Endothelial cell of umbilical vein (primary cell): ENCODE measurements at regions of chr10 and their contacts with region 1.

Region 1: GRCh38 chr10:71270301-71271220 is 48.5 kb upstream of the SLC29A3 start:
- DNase-seq: peak; percentile 54
- H3K4me3 ChIP-seq: no peak overlapping the region
- H3K27ac ChIP-seq: peak overlapping the region; percentile 82
- H3K4me1 ChIP-seq: peaks cover 19% of the 10 kb centered on the region
- H3K27me3 ChIP-seq: no peaks in the 10 kb centered on the region
- CTCF ChIP-seq: peak; percentile 66 to 80
- POLR2A ChIP-seq: no peak

Region 2: DNA sequence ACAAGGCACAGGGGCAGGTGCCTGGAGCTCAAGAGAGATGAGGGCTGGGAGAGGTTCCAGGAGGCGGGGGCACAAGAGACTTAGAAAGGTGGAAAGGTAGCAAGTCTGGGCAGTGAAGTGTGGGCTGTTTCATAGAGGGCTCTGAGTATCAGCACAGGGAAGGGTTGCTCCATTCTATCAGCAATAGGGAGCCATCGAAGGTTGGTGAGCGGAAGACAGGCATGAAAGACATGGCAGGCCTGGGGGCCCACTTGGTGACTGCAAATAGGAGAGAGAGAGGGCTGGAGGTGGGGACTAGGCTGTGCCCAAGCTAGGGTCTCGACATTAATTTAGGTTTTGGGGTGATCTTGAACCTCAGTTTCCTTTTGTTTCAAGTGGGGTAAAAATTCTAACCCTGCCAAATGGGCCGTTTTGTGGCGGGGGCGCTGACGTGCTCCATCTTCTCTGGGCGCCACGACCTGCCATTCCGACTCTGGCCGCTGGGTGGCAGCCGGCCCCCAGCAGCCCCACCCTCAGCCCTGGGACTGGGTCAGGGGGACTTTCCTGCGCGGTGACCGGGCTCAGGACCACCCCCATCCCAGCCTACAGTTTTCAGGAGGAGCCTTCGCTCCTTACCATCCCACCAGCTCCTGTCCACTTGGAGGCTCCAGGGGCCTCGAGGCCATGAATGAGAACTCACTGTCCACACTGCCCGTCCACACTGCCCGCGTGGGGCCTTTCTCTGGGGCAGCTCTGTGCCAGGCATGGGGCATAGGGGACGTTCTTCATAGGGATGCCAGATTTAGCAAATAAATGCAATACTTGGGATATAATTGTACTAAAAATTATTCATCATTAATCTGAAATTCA is 345.0 kb before region 1 on chr10:
- CTCF ChIA-PET with region 1: interaction called, 26 read pairs
- POLR2A ChIA-PET with region 1: no interaction called
- dilution Hi-C with region 1: no loop called
- intact Hi-C with region 1: loop called (anchors 5 kb)
- DNase-seq: peak; percentile 30
- H3K4me3 ChIP-seq: no peak overlapping the region
- H3K27ac ChIP-seq: no peak overlapping the region
- H3K4me1 ChIP-seq: no peaks in the 10 kb centered on the region
- H3K27me3 ChIP-seq: peaks cover 5 to 9% of the 10 kb centered on the region in 2 experiments
- CTCF ChIP-seq: peak; percentile 91 to 94
- POLR2A ChIP-seq: no peak

Region 3: GRCh38 chr10:71212318-71213126 is 58.0 kb before region 1 on chr10 and contains the start of gene UNC5B:
- CTCF ChIA-PET with region 1: interaction called, 51 read pairs
- POLR2A ChIA-PET with region 1: no interaction called
- dilution Hi-C with region 1: no loop called
- intact Hi-C with region 1: loop called (anchors 1 kb)
- DNase-seq: peak; percentile 80
- H3K4me3 ChIP-seq: peak within 1 kb of the TSS; percentile 11 to 36 (median 33)
- H3K27ac ChIP-seq: no peak within 1 kb of the TSS
- H3K4me1 ChIP-seq: peaks cover 21% of the 10 kb centered on the region
- H3K27me3 ChIP-seq: peaks cover 46 to 63% of the 10 kb centered on the region in 2 experiments
- CTCF ChIP-seq: peak in 1 of 2 donors; percentile 19
- POLR2A ChIP-seq: no peak
- total RNA-seq, gene UNC5B: 2.5 and 5.4 TPM in 2 replicates

Region 4: GRCh38 chr10:71234970-71235685 is 35.4 kb before region 1 on chr10:
- CTCF ChIA-PET with region 1: interaction called, 19 read pairs
- POLR2A ChIA-PET with region 1: no interaction called
- dilution Hi-C with region 1: no loop called
- intact Hi-C with region 1: no loop called
- DNase-seq: no peak
- H3K4me3 ChIP-seq: no peak overlapping the region
- H3K27ac ChIP-seq: no peak overlapping the region
- H3K4me1 ChIP-seq: peaks cover 5% of the 10 kb centered on the region
- H3K27me3 ChIP-seq: peaks cover 3 to 21% of the 10 kb centered on the region in 2 experiments
- CTCF ChIP-seq: no peak
- POLR2A ChIP-seq: no peak

Region 5: DNA sequence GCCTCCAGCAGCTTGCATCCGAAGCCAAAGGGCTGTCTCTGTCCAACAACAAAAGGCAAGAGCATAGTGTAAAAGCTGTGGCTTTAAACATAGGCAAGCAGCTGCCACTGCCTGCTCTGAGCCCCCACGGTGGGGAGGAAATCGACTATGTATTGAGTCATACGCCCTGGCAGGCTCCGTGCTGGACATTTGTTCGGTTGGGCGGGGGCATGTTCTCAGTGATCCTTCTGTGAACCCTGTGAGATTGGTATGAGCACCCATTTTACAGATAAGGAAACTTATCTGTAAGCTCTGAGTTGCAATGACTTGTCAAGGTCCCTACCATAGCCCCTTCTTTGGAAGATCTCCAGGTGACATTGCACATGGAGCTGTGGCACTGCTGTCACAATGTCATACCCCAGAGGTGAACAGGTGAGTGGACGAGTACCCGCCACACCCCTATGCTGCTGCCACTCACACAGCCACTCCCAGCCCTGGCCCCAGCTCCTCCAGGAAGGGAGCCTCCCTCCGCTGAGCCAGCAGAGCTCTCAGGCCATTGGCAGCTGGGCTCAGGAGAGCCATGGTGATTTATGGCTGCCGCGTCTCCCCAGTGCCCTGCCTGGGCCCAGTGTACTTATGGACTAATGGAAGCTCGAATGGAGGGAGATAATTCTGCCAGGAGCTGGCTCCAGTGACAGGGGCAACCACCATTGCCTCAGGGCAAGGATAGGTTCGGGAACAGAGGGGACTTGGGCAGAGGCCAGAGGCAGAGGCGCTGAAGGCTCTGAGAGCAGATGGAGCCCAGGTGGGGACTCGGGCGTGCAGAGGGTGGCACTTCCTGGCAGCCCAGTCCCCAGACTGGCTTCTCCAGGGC is 14.5 kb before region 1 on chr10:
- CTCF ChIA-PET with region 1: interaction called, 69 read pairs
- POLR2A ChIA-PET with region 1: interaction called, 7 read pairs
- dilution Hi-C with region 1: no loop called
- intact Hi-C with region 1: no loop called
- DNase-seq: peak; percentile 84
- H3K4me3 ChIP-seq: no peak overlapping the region
- H3K27ac ChIP-seq: peak overlapping the region; percentile 10
- H3K4me1 ChIP-seq: peaks cover 24% of the 10 kb centered on the region
- H3K27me3 ChIP-seq: no peaks in the 10 kb centered on the region
- CTCF ChIP-seq: no peak
- POLR2A ChIP-seq: no peak

Region 6: GRCh38 chr10:71293446-71294084 is 23.0 kb after region 1 on chr10:
- CTCF ChIA-PET with region 1: interaction called, 15 read pairs
- POLR2A ChIA-PET with region 1: no interaction called
- dilution Hi-C with region 1: no loop called
- intact Hi-C with region 1: no loop called
- DNase-seq: no peak
- H3K4me3 ChIP-seq: no peak overlapping the region
- H3K27ac ChIP-seq: no peak overlapping the region
- H3K4me1 ChIP-seq: no peaks in the 10 kb centered on the region
- H3K27me3 ChIP-seq: no peaks in the 10 kb centered on the region
- CTCF ChIP-seq: no peak
- POLR2A ChIP-seq: no peak